ENCODE measurements at regions of chr9 and their contacts with region 1.

Region 1: GRCh38 chr9:137114610-137115391 is at the start of gene DPP7:
- DNase-seq: peak; percentile 92
- ATAC-seq: peak; percentile 86
- total RNA-seq, gene DPP7: 143 TPM

Region 2: GRCh38 chr9:137223078-137223970 is 108.5 kb after region 1 on chr9:
- intact Hi-C with region 1: loop called (anchors 2 kb)
- DNase-seq: peak; percentile 98
- ATAC-seq: peak; percentile 93

Measured in Right ventricle myocardium inferior (tissue), 1 donor.